Activated T-helper 2 cell treated with anti-CD3 and anti-CD28 coated beads, Interferon-gamma antibody, Interleukin-2, Interleukin-4, amounts not matched to agents 10 μg/mL and 5 μg/mL and 100 μg/mL, durations not matched to agents 14 hours and 24 hours and 36 hours (primary cell): ENCODE measurements at regions of chr1 and their contacts with region 1.

Region 1: GRCh38 chr1:97943354-97943753 is 22.5 kb upstream of the DPYD start:
- DNase-seq: no peak
- H3K4me3 Mint-ChIP-seq: peak overlapping the region; percentile 11
- H3K27ac Mint-ChIP-seq: peak overlapping the region; percentile 18
- H3K4me1 Mint-ChIP-seq: peaks cover 37% of the 10 kb centered on the region
- H3K27me3 Mint-ChIP-seq: peaks cover 11% of the 10 kb centered on the region

Region 2: GRCh38 chr1:97265630-97266029 is 677.7 kb before region 1 on chr1:
- intact Hi-C with region 1: no loop called
- DNase-seq: no peak
- H3K4me3 Mint-ChIP-seq: no peak overlapping the region
- H3K27ac Mint-ChIP-seq: no peak overlapping the region
- H3K4me1 Mint-ChIP-seq: no peaks in the 10 kb centered on the region
- H3K27me3 Mint-ChIP-seq: no peaks in the 10 kb centered on the region

Region 3: GRCh38 chr1:98030483-98030882 is 87.1 kb after region 1 on chr1:
- intact Hi-C with region 1: loop called (anchors 5 kb)
- DNase-seq: no peak
- H3K4me3 Mint-ChIP-seq: no peak overlapping the region
- H3K27ac Mint-ChIP-seq: no peak overlapping the region
- H3K4me1 Mint-ChIP-seq: peaks cover 7% of the 10 kb centered on the region
- H3K27me3 Mint-ChIP-seq: peaks cover 13% of the 10 kb centered on the region